ENCODE measurements at regions of chr2 and their contacts with region 1.

Region 1: DNA sequence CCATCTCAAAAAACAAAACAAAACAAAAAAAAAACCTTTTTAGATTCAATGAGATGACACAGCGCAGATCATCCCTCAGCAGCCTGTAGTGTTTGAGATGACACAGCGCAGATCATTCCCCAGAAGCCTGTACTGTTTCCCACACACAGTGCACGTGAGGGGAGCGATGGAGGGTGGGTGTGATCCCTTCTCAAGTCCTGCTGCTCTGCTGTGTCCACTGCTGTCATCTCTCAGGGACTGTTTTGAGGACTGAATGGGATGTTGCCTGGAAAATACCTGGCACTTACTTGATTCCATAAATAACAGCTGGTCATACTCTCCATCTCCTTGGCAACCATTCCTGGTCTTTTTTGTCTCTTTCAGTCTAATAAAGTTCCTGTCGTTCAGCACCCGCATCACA is 25.7 kb downstream of the TGOLN2 start:
- DNase-seq: no peak
- ATAC-seq: no peak
- H3K4me3 Mint-ChIP-seq: no peak overlapping the region
- H3K27ac Mint-ChIP-seq: no peak overlapping the region
- H3K4me1 Mint-ChIP-seq: peaks cover 11% of the 10 kb centered on the region
- H3K27me3 Mint-ChIP-seq: no peaks in the 10 kb centered on the region
- CTCF ChIP-seq: no peak

Region 2: GRCh38 chr2:85017411-85018048 is 284.6 kb before region 1 on chr2:
- CTCF ChIA-PET with region 1: interaction called, 14 read pairs
- POLR2A ChIA-PET with region 1: no interaction called
- DNase-seq: no peak
- ATAC-seq: no peak
- H3K4me3 Mint-ChIP-seq: no peak overlapping the region
- H3K27ac Mint-ChIP-seq: 0 out of 2 replicates have a peak overlapping the region, but pooled peaks have one; percentile 29
- H3K4me1 Mint-ChIP-seq: peaks cover 58% of the 10 kb centered on the region
- H3K27me3 Mint-ChIP-seq: no peaks in the 10 kb centered on the region
- CTCF ChIP-seq: no peak; the same call in 1 of the 2 replicates

Region 3: GRCh38 chr2:85181134-85181631 is 120.9 kb before region 1 on chr2:
- CTCF ChIA-PET with region 1: interaction called, 16 read pairs
- POLR2A ChIA-PET with region 1: no interaction called
- DNase-seq: no peak
- ATAC-seq: no peak; the same call in 1 of the 2 replicates
- H3K4me3 Mint-ChIP-seq: no peak overlapping the region; the same call in 1 of the 2 replicates
- H3K27ac Mint-ChIP-seq: peak overlapping the region; percentile 84
- H3K4me1 Mint-ChIP-seq: peaks cover 92% of the 10 kb centered on the region
- H3K27me3 Mint-ChIP-seq: no peaks in the 10 kb centered on the region
- CTCF ChIP-seq: no peak

Region 4: GRCh38 chr2:85266146-85267041 is 35.7 kb before region 1 on chr2:
- CTCF ChIA-PET with region 1: interaction called, 11 read pairs
- POLR2A ChIA-PET with region 1: interaction called, 4 read pairs
- DNase-seq: peak; percentile 85
- ATAC-seq: peak; percentile 63
- H3K4me3 Mint-ChIP-seq: no peak overlapping the region
- H3K27ac Mint-ChIP-seq: peak overlapping the region; percentile 67
- H3K4me1 Mint-ChIP-seq: peaks cover 72% of the 10 kb centered on the region
- H3K27me3 Mint-ChIP-seq: no peaks in the 10 kb centered on the region
- CTCF ChIP-seq: peak; percentile 95

Region 5: DNA sequence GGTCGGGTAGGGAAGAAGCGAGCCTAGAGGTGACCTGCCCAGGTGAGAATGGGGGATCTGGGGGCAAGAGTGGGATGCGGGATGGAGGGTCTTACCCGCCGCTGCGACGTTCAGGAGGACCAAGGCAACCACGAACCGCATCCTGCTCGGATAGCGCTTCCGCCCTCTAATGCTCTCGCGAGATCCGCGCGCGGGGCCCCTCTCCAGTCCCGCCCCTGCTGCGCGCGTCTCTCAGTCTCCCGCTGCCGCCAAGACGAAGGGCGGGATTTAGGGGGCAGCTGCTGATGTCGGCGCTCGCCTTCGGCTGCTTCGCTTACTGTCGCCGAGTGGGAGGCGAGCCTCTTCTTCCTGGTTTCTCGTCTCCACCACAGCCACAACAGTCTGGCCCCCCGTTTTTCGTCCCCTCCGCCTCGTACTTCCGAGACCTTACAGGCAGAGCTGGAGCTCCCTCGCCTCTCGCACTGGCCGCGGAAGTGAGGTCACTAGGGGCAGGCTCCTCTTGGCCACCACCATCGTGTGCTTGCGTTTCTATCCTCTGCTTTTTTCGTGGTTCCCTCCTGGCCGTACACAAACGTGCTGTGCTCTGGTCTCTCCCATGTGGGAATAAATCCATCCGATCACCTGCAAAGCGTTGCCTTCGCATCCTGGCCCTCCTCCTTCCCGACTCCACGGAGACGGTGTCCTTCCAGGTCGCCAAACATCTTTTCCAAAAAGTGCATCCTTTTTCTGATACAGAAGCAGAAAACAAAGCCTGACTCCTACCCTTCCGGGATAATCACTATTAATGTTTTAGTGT is 25.9 kb after region 1 on chr2 and contains the start of gene TGOLN2:
- CTCF ChIA-PET with region 1: interaction called, 10 read pairs
- POLR2A ChIA-PET with region 1: no interaction called
- DNase-seq: peak; percentile 88
- ATAC-seq: peak; percentile 92
- H3K4me3 Mint-ChIP-seq: peak within 1 kb of the TSS; percentile 97
- H3K27ac Mint-ChIP-seq: peak within 1 kb of the TSS; percentile 100
- H3K4me1 Mint-ChIP-seq: peaks cover 45% of the 10 kb centered on the region
- H3K27me3 Mint-ChIP-seq: no peaks in the 10 kb centered on the region
- CTCF ChIP-seq: no peak
- total RNA-seq, gene TGOLN2: 42.2 to 43.9 TPM (median 43.7 TPM) in 3 replicates

Region 6: GRCh38 chr2:85390941-85391669 is 89.0 kb after region 1 on chr2:
- CTCF ChIA-PET with region 1: no interaction called
- POLR2A ChIA-PET with region 1: no interaction called
- DNase-seq: peak; percentile 94
- ATAC-seq: peak; percentile 89
- H3K4me3 Mint-ChIP-seq: no peak overlapping the region
- H3K27ac Mint-ChIP-seq: no peak overlapping the region
- H3K4me1 Mint-ChIP-seq: peaks cover 22% of the 10 kb centered on the region
- H3K27me3 Mint-ChIP-seq: no peaks in the 10 kb centered on the region
- CTCF ChIP-seq: peak; percentile 72

Measured in WTC11 (cell line).